GM23248 (cell line): ENCODE measurements at regions of chr5 and their contacts with region 1.

Region 1: DNA sequence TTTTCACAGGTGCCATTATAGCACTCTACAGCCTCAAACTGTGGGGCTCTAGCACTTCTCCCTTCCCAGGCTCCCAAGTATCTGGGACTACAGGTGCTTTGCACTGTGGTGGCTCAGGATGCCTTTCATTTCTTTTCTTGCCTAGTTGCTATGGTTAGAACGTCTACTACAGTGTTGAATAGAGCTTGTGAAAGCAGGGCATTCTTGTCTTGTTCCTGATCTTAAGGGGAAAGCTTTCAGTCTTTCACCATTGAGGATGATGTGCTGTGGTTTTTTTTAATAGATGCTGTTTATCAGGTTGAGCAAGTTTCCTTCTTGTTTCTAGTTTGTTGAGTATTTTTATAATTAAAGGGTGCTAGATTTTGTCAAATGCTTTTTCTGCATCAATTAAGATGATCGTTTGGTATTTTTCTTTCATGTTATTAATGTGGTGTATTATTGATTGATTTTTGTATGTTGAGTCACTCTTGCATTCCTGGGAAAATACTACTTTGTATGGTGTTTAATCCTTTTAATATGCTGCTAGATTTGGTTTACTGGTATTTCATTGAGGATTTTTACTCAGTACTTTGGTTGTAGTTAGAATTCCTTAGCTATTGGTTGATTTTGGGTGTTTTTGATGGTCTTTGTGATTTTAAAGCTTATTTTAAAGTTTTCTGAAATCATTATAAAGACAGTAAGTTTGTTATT is 35.6 kb downstream of the GPBP1 start:
- DNase-seq: peak; percentile 34
- H3K4me3 ChIP-seq: peak overlapping the region; percentile 27; the same call in 1 of the 2 replicates
- H3K27ac ChIP-seq: peak overlapping the region; percentile 50
- H3K4me1 ChIP-seq: peaks cover 21% of the 10 kb centered on the region
- H3K27me3 ChIP-seq: no peaks in the 10 kb centered on the region

Region 2: DNA sequence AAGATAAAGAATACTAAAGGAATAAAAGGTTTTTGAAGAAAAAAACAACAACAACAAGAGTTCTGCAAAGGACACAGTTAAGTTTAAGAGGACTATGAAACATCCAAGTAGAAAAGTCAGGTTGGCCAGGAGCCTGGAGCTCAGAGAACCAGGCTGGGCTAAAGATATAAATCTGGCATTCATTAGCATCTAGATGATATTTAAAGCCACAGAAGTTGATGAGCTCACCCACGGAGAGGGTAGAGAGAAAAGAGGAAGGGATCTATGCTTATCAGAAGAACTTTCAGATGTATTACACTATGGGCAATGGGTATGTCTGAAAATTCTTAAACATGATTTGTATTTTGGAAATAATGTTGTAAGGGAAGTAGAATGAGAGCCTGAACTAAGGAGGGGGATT is 267.5 kb before region 1 on chr5:
- in situ Hi-C with region 1: loop called (anchors 10 kb)
- DNase-seq: peak; percentile 81
- H3K4me3 ChIP-seq: no peak overlapping the region
- H3K27ac ChIP-seq: no peak overlapping the region
- H3K4me1 ChIP-seq: peaks cover 8% of the 10 kb centered on the region
- H3K27me3 ChIP-seq: no peaks in the 10 kb centered on the region

Region 3: DNA sequence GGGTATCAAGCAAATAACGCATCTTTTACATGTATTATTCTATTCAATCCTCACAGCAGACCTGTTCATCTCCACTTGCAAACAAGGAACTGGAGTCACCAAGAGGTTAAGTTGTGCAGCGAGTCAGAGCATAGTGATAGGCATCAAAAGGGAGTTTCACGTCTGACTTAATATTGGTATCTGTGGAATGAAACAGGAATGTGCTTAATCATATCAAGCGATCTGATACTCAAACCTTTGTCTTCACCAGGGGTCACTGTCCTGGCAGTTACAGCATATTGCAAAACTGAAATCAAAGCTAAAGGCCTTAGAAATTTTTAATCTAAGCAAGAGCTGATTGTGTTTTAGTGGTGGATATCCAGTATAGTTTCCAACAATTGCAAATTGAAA is 978.8 kb after region 1 on chr5:
- in situ Hi-C with region 1: no loop called
- DNase-seq: peak; percentile 66
- H3K4me3 ChIP-seq: no peak overlapping the region
- H3K27ac ChIP-seq: no peak overlapping the region
- H3K4me1 ChIP-seq: peaks cover 57% of the 10 kb centered on the region
- H3K27me3 ChIP-seq: no peaks in the 10 kb centered on the region